H1 (cell line): ENCODE measurements at regions of chr16 and their contacts with region 1.

Region 1: GRCh38 chr16:57591086-57591869 is 37.2 kb upstream of the ADGRG1 start:
- DNase-seq: peak in 1 of 2 experiments; percentile 88
- H3K4me3 ChIP-seq: no peak overlapping the region
- H3K27ac ChIP-seq: no peak overlapping the region
- H3K4me1 ChIP-seq: no peaks in the 10 kb centered on the region; a peak in 1 of 7 replicates
- H3K27me3 ChIP-seq: peaks cover 0 to 4% (median under 1%) of the 10 kb centered on the region in 4 experiments; a peak in 2 of 7 replicates
- CTCF ChIP-seq: peak; percentile 84 to 99 (median 96)
- EP300 ChIP-seq: no peak
- POLR2A ChIP-seq: no peak
- RAD21 ChIP-seq: peak; percentile 88 to 93

Region 2: DNA sequence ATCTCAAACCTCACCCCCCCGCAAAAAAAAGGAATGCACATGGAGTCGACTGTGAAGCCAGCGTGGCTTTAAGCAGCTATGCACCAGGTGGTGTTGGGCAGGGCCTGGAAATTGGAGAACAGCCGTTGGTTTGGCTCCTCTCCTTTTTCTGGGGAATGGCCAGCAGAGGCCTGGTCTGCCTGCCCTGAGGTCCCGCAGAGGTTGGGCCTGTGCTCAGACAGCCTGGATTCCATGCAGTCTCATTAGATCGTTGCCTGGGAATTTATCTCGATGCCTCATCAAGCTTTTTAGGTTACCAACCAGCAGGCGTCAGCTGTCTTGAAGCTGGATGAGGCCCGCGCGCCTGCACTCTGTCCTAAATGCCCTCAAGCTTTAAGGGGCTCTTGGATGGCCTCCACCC is 716.5 kb before region 1 on chr16:
- CTCF ChIA-PET with region 1: no interaction called
- POLR2A ChIA-PET with region 1: no interaction called
- DNase-seq: no peak
- H3K4me3 ChIP-seq: no peak overlapping the region
- H3K27ac ChIP-seq: no peak overlapping the region
- H3K4me1 ChIP-seq: no peaks in the 10 kb centered on the region
- H3K27me3 ChIP-seq: no peaks in the 10 kb centered on the region
- CTCF ChIP-seq: no peak
- EP300 ChIP-seq: no peak
- POLR2A ChIP-seq: no peak
- RAD21 ChIP-seq: no peak

Region 3: GRCh38 chr16:57609541-57610401 is 18.5 kb after region 1 on chr16:
- CTCF ChIA-PET with region 1: interaction called, 37 read pairs
- POLR2A ChIA-PET with region 1: no interaction called
- DNase-seq: peak in 1 of 2 experiments; percentile 41
- H3K4me3 ChIP-seq: no peak overlapping the region
- H3K27ac ChIP-seq: no peak overlapping the region
- H3K4me1 ChIP-seq: no peaks in the 10 kb centered on the region
- H3K27me3 ChIP-seq: 0 out of 7 replicates have a peak, but pooled peaks cover 0 to 2% (median 0%) of the 10 kb centered on the region in 4 experiments
- CTCF ChIP-seq: peak; percentile 19 to 33 (median 29)
- EP300 ChIP-seq: no peak
- POLR2A ChIP-seq: no peak
- RAD21 ChIP-seq: peak; percentile 33 to 49; a peak in 3 of 4 replicates

Region 4: DNA sequence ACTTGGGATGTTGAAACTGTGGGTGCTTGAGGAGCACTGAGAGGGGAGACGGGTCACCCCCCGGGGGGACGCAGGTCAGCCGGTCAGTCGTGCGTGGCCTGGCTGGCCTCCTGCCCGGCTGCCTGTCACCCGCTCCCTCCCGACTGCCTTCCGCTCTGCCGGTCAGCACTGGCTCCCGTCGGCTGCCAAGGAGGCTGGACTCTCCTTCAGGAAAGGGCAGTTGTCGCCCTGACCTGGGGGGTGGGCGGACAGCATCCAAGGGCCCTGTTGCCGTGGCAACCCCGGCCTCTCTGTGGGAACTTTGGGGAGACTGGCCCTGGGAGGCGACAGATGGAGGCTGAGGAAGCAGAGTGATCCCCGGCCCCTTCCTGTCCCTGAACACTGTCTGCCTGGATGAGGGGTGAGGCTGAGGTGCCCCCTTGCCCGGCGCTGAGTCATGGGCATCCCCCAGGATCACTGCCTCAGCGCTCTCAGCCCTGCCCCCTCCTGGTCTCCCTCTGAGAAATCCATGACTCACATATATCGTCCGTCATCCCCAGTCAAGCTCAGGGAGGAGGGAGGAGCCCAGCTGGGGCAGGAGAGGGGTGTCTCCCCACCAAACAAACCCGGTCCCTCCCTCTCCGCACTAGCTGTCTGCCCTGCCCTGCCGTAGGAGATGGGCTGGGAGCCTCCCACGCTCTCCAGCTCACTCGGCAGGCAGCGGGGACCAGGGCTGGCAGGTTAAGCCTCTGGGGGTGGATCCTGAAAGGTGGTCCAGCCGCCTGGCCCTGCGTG is 36.9 kb after region 1 on chr16 and contains the start of gene ADGRG1:
- CTCF ChIA-PET with region 1: interaction called, 12 read pairs
- POLR2A ChIA-PET with region 1: no interaction called
- DNase-seq: peak; percentile 65 to 72
- H3K4me3 ChIP-seq: peak within 1 kb of the TSS in 1 of 4 experiments; percentile 49; a peak in 2 of 8 replicates
- H3K27ac ChIP-seq: no peak within 1 kb of the TSS
- H3K4me1 ChIP-seq: peaks cover 0 to 21% (median 15%) of the 10 kb centered on the region in 4 experiments; a peak in 6 of 7 replicates
- H3K27me3 ChIP-seq: peaks cover 0 to 2% (median 0%) of the 10 kb centered on the region in 4 experiments; a peak in 2 of 7 replicates
- CTCF ChIP-seq: peak; percentile 15 to 38 (median 26); a peak in 3 of 4 replicates
- EP300 ChIP-seq: no peak
- POLR2A ChIP-seq: no peak
- RAD21 ChIP-seq: peak in 1 of 2 experiments; percentile 21; a peak in 1 of 4 replicates
- total RNA-seq, gene ADGRG1: 0.78 and 1.3 TPM in 2 replicates

Region 5: DNA sequence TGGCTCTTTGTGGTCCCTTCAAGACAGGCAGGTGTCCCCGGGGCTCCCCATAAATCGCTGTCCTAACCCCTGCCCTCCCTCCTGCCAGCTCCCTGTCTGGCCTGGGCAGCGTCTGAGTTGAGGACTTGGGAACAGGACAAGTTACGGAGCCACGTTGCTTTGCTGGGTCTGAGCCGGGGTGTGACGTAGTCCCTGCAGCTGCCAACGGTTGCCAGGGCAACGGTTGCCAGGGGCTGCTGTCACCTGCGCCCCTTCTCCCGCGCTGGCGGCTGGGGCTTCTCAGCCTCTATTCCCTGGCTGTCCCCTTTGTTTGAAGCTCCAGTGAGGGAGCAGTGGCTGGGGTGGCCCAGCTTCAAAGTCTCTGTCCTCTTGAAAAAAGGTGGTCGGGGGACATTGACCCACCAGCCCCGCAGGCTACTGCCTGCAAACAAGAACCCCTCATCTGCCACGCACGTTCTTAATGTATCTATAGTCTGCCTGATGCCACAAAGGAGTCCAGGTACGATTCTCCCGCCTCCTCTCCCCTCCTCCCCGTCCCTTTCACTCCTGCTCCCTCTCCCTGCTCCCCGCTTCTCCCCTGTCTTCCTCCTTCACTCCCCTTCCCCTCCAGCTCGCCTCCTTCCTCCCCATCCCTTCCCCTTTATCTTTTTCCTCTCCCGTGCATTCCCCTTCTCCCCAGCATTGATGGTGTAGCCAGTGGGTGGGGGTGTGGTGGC is 48.1 kb after region 1 on chr16:
- CTCF ChIA-PET with region 1: interaction called, 15 read pairs
- POLR2A ChIA-PET with region 1: no interaction called
- DNase-seq: peak in 1 of 2 experiments; percentile 84
- H3K4me3 ChIP-seq: peak overlapping the region in 1 of 4 experiments; percentile 18; a peak in 2 of 8 replicates
- H3K27ac ChIP-seq: no peak overlapping the region
- H3K4me1 ChIP-seq: peaks cover 0 to 3% (median 1%) of the 10 kb centered on the region in 4 experiments; a peak in 4 of 7 replicates
- H3K27me3 ChIP-seq: peaks cover 0 to 6% (median 4%) of the 10 kb centered on the region in 4 experiments; a peak in 5 of 7 replicates
- CTCF ChIP-seq: no peak
- EP300 ChIP-seq: no peak
- POLR2A ChIP-seq: no peak
- RAD21 ChIP-seq: no peak

Region 6: GRCh38 chr16:57723170-57723569 is 131.9 kb after region 1 on chr16:
- CTCF ChIA-PET with region 1: interaction called, 10 read pairs
- POLR2A ChIA-PET with region 1: no interaction called
- DNase-seq: peak in 1 of 2 experiments; percentile 77
- H3K4me3 ChIP-seq: no peak overlapping the region
- H3K27ac ChIP-seq: no peak overlapping the region
- H3K4me1 ChIP-seq: no peaks in the 10 kb centered on the region
- H3K27me3 ChIP-seq: no peaks in the 10 kb centered on the region; a peak in 1 of 7 replicates
- CTCF ChIP-seq: peak; percentile 58 to 81 (median 67)
- EP300 ChIP-seq: no peak
- POLR2A ChIP-seq: no peak
- RAD21 ChIP-seq: peak; percentile 73 to 85